ENCODE measurements at regions of chr12 and their contacts with region 1.

Region 1: DNA sequence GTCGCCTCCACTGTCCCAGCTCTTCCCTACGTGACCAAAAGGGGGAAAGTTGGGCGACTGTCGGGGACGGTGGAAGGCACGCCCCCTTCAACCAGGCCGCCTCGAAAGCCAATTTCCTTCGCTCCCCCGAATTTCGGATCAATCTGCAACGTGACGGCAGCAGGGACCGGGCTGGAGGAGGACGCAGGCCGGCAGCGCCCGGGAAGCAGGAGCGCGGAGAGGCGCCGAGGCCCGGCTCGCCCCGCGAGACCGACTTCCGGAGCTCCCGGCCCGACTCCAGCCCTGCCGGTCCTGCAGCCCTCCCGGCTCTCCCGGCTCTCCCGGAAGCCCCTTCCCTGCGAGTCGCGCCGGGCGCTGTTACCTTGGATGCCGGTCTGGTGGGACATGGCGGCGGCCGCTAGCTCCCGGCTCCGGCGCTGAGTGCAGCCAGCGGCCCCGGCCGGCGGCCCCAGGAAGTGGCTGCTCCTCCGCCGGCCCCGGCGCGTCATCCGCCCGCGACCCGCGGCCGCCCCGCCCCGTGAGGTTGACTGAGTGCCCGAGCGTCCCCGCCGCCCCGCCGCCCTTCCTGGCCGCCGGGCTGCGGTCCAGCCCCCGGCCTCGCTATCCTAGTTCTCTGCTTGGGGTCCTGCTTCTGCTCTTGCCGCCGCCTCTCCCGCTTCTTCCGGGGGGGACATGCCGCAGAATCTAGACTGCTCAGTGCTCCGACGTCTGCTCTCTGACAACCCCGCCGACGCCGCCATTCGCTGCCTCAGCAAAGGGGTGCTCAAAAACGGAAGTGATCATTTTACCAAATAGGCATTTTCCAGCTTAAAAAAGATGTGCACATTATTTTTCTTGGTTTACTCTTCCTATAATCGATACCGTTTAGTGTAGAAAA is at the start of gene TWF1:
- DNase-seq: peak; percentile 73 to 82
- ATAC-seq: peak; percentile 98 to 99
- H3K4me3 ChIP-seq: peak within 1 kb of the TSS; percentile 85
- H3K27ac ChIP-seq: peak within 1 kb of the TSS; percentile 92 to 99
- H3K4me1 ChIP-seq: peaks cover 22% of the 10 kb centered on the region; the same call in 2 of the 3 replicates
- CTCF ChIP-seq: 0 out of 3 replicates have a peak, but pooled peaks have one; percentile 11
- EP300 ChIP-seq: no peak
- POLR2A ChIP-seq: peak; percentile 78
- RAD21 ChIP-seq: no peak
- polyA plus RNA-seq, gene TWF1: 128 and 173 TPM in 2 replicates

Region 2: GRCh38 chr12:43758728-43759563 is 47.2 kb before region 1 on chr12 and contains the starts of genes IRAK4 and PUS7L:
- CTCF ChIA-PET with region 1: interaction called, 3 read pairs
- POLR2A ChIA-PET with region 1: interaction called, 18 read pairs
- DNase-seq: peak; percentile 88 to 98
- ATAC-seq: peak; percentile 97
- H3K4me3 ChIP-seq: peak within 1 kb of the TSS; percentile 61
- H3K27ac ChIP-seq: peak within 1 kb of the TSS; percentile 67 to 89
- H3K4me1 ChIP-seq: peaks cover 12% of the 10 kb centered on the region; the same call in 2 of the 3 replicates
- CTCF ChIP-seq: peak; percentile 18
- EP300 ChIP-seq: no peak
- POLR2A ChIP-seq: peak; percentile 56
- RAD21 ChIP-seq: peak; percentile 16 to 24; a peak in 1 of 5 replicates
- polyA plus RNA-seq, gene IRAK4: 15.7 and 18.4 TPM in 2 replicates
- polyA plus RNA-seq, gene PUS7L: 12.1 and 16.6 TPM in 2 replicates

Region 3: GRCh38 chr12:43795716-43796288 is 10.3 kb before region 1 on chr12:
- CTCF ChIA-PET with region 1: interaction called, 5 read pairs
- POLR2A ChIA-PET with region 1: interaction called, 10 read pairs
- DNase-seq: peak in 1 of 2 experiments; percentile 58
- ATAC-seq: peak; percentile 45 to 63; a peak in 3 of 6 replicates
- H3K4me3 ChIP-seq: no peak overlapping the region
- H3K27ac ChIP-seq: no peak overlapping the region
- H3K4me1 ChIP-seq: peaks cover 13% of the 10 kb centered on the region
- CTCF ChIP-seq: no peak
- EP300 ChIP-seq: no peak
- POLR2A ChIP-seq: no peak
- RAD21 ChIP-seq: no peak

Region 4: DNA sequence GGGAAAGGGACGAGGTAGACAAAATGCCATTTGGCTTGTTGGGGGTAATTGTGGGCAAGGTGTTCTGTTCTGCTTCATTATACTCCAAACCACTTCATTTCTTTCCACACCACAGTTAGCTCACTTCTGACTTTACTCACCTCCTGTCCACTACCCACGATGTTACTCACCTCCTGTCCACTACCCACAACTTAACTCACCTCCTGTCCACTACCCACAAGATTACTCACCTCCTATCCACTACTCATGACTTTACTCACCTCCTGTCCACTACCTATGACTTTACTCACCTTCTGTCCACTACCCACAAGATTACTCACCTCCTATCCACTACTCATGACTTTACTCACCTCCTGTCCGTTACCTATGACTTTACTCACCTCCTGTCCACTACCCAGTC is 10.1 kb after region 1 on chr12:
- CTCF ChIA-PET with region 1: interaction called, 5 read pairs
- POLR2A ChIA-PET with region 1: interaction called, 14 read pairs
- DNase-seq: no peak
- ATAC-seq: no peak
- H3K4me3 ChIP-seq: no peak overlapping the region
- H3K27ac ChIP-seq: no peak overlapping the region
- H3K4me1 ChIP-seq: no peaks in the 10 kb centered on the region
- CTCF ChIP-seq: no peak
- EP300 ChIP-seq: no peak
- POLR2A ChIP-seq: no peak
- RAD21 ChIP-seq: no peak

Region 5: DNA sequence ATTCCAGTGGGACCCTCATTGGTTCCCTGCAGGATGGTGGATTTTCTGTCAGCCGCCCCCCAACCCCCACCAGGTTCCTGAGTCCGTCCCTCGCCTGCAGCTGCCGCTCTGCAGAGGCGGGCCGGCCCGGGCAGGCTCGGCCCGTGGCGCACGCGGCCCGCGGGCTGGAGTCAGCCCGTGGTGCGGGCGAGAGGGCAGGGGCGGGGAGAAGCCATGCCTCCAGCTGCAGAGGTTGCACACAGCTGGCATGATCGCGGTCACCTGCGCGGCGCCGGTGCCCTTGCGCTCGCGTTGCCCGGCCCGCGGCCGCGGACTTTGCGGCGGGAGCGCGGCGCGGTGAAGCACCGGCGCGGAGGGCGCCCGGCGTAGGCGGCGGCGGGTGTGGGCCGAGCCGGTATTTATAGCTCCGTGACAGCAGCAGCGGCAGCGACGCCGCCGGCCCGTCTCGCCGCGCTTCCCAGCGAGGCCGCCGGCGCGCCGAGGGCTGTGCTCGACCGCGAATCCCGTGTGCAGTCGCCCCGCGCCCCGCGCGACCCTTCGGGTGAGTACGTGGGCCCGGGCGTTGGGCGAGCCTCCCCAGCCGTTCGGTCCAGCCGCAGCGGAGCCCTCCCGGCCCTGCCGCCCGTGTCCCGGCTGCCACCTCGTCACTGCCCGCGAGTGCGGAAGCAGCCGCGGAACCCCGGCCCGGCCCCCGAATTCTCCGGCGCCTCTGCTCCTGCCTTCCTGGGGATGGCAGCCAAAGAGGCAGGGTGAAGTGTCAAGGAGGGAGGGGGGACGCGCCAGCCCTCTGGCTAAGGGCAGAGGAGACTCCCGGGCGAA is 29.8 kb after region 1 on chr12 and contains the start of gene TMEM117:
- CTCF ChIA-PET with region 1: interaction called, 5 read pairs
- POLR2A ChIA-PET with region 1: interaction called, 34 read pairs
- DNase-seq: peak; percentile 48 to 52
- ATAC-seq: peak; percentile 85 to 89
- H3K4me3 ChIP-seq: peak within 1 kb of the TSS; percentile 59
- H3K27ac ChIP-seq: peak within 1 kb of the TSS; percentile 75 to 98
- H3K4me1 ChIP-seq: peaks cover 10% of the 10 kb centered on the region; the same call in 2 of the 3 replicates
- CTCF ChIP-seq: no peak
- EP300 ChIP-seq: no peak
- POLR2A ChIP-seq: peak; percentile 77
- RAD21 ChIP-seq: no peak
- polyA plus RNA-seq, gene TMEM117: 4.6 and 7.3 TPM in 2 replicates

Region 6: GRCh38 chr12:43882578-43883178 is 76.6 kb after region 1 on chr12:
- CTCF ChIA-PET with region 1: interaction called, 14 read pairs
- POLR2A ChIA-PET with region 1: interaction called, 20 read pairs
- DNase-seq: peak; percentile 22 to 75
- ATAC-seq: peak; percentile 88 to 95
- H3K4me3 ChIP-seq: no peak overlapping the region
- H3K27ac ChIP-seq: no peak overlapping the region
- H3K4me1 ChIP-seq: no peaks in the 10 kb centered on the region
- CTCF ChIP-seq: peak; percentile 89
- EP300 ChIP-seq: no peak
- POLR2A ChIP-seq: no peak
- RAD21 ChIP-seq: peak; percentile 94 to 99

Region 7: DNA sequence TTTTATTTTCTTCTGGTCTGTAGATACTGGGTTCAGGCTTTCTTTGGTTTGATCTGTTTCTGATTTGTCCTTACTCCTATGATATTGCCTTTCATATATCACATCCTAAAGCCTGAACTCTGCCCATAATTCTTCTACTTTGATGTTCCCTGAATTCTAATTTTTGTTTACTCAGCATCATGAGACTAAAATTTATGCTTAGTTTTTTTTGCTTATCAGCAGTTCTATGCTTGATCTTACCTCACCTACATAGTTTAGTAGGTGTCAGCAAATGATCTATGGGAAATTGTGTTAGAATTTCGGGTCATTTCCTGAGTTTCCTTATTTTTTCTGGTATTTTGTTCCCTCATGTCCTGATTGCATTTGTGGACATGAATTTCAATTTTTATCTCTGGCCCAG is 123.9 kb after region 1 on chr12:
- CTCF ChIA-PET with region 1: no interaction called
- POLR2A ChIA-PET with region 1: no interaction called
- DNase-seq: no peak
- ATAC-seq: no peak
- H3K4me3 ChIP-seq: no peak overlapping the region
- H3K27ac ChIP-seq: no peak overlapping the region
- H3K4me1 ChIP-seq: no peaks in the 10 kb centered on the region
- CTCF ChIP-seq: no peak
- EP300 ChIP-seq: no peak
- POLR2A ChIP-seq: no peak
- RAD21 ChIP-seq: no peak